PC-9 (cell line): ENCODE measurements at regions of chr1 and their contacts with region 1.

Region 1: GRCh38 chr1:84632673-84633434 is 57.4 kb downstream of the SSX2IP start:
- DNase-seq: peak; percentile 41 to 91
- H3K4me3 ChIP-seq: no peak overlapping the region
- H3K27ac ChIP-seq: peak overlapping the region; percentile 90
- H3K4me1 ChIP-seq: peaks cover 42% of the 10 kb centered on the region
- H3K27me3 ChIP-seq: no peaks in the 10 kb centered on the region
- CTCF ChIP-seq: no peak

Region 2: DNA sequence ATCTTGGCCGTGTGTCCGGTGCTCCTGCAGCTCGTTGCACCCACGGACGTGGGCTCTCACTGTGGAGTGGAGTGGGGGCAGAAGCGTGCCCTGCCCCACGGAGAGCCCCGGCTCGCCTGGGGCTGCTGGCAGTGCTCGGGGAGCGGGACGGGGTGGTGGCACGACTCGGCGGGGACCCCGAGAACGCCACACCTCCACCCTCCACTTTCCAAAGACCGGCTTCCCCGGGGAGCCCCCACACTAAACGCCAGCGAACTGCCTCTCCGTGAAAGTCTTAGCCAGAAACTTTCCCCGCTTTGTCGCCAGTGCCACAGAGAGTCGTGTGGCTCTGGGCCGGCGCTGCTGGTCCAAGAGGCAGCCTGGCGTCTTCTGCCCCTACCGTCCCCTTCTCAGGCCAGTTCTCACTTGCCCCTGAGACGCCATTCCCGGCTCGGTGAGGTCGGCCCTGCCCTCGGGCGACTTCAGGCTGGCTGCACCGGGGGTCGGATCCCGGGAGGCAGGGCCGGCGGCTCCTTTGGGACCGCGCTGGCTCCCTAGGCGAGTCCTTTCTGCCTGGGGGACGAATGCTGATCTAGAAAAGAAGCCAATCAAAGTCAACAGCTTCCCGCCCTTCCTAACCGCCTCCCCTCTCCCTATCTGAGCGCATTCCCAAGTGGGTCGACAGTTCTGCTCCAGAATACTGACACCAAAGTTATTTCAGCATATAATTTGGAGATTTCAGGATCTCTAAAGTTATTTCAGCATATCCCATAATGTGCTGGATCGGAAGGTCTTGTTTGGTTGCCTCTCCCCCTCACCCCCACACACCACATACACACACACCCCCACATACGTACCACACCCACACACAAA is 333.9 kb before region 1 on chr1:
- CTCF ChIA-PET with region 1: no interaction called
- POLR2A ChIA-PET with region 1: no interaction called
- intact Hi-C with region 1: no loop called
- DNase-seq: peak in 1 of 2 experiments; percentile 42
- H3K4me3 ChIP-seq: peak overlapping the region; percentile 99
- H3K27ac ChIP-seq: no peak overlapping the region
- H3K4me1 ChIP-seq: peaks cover 24% of the 10 kb centered on the region
- H3K27me3 ChIP-seq: no peaks in the 10 kb centered on the region
- CTCF ChIP-seq: no peak

Region 3: GRCh38 chr1:84365225-84366221 is 267.3 kb before region 1 on chr1:
- CTCF ChIA-PET with region 1: no interaction called
- POLR2A ChIA-PET with region 1: no interaction called
- intact Hi-C with region 1: loop called (anchors 10 kb)
- DNase-seq: peak; percentile 58 to 99
- H3K4me3 ChIP-seq: no peak overlapping the region
- H3K27ac ChIP-seq: peak overlapping the region; percentile 59
- H3K4me1 ChIP-seq: peaks cover 36% of the 10 kb centered on the region
- H3K27me3 ChIP-seq: no peaks in the 10 kb centered on the region
- CTCF ChIP-seq: no peak

Region 4: DNA sequence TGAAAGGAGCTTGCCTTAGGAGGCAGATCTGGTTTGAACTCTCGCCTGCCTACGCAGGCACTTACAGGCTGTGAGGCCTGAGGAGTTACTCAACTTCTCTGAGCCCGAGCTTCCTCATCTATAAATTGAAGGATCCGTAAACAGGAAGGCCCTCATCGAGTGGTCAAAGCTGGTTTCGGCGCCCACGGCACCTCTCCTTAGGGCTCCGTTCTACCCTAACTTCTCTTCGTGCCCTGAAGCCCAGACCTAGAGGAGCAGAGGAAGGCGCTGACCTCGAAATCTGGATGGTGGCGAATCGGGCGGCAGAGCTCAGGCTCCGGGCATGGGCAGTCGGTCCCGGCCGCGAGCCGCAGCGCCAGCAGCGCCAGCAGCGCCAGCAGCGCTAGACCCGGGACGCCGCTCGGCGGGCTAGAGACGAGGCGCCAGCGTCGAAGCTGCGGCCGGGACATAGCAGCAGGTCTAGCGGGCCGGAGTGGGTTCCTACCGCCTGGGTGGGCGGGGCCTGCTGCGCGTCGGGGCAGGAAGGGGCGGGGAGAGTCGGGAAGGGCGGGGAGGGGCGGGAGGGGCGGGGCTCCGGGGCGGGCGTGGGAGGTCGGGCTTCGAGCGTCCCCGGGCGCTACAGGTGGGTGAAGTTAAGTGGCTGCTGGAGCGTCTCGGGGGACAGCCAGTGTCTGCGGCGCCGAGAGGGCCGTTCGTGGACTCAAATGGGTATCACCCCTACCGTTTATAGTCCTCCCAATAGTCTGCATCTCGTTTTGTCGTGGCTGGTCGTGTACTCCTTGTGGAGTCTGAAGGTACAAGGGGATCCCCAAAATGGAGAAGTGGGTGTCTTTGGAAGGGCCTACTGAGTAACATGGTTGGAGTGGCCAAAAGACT is 58.6 kb before region 1 on chr1 and contains the start of gene CTBS:
- CTCF ChIA-PET with region 1: no interaction called
- POLR2A ChIA-PET with region 1: no interaction called
- intact Hi-C with region 1: loop called (anchors 10 kb)
- DNase-seq: peak; percentile 78 to 80
- H3K4me3 ChIP-seq: peak within 1 kb of the TSS; percentile 89
- H3K27ac ChIP-seq: peak within 1 kb of the TSS; percentile 94
- H3K4me1 ChIP-seq: peaks cover 26% of the 10 kb centered on the region
- H3K27me3 ChIP-seq: no peaks in the 10 kb centered on the region
- CTCF ChIP-seq: no peak
- total RNA-seq, gene CTBS: 17.5 and 20.2 TPM in 2 replicates

Region 5: DNA sequence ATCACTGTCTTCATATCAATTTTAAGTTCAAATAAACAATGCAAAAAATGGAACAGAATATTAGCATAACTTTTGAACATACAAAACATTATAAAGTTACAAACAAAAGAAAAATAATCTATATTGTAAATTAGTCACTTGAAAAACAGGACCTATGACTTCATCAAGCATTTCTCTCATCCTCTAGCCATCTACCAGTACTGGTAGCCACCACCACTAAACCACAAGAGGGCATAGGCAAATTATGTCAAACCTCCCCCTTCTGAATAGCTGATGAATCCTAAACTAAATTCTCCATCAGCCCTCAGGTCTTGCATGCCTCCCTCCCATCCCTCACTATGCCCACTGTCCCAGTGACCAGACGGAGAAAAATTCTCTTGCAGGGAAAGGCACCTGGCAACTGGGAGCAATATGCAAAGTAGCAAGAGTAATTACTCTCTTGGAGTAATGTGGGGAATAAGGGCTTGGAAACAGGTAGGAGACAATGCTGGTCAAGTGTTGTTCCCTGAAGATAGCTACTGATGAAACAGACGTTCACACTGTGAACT is 20.4 kb after region 1 on chr1:
- CTCF ChIA-PET with region 1: no interaction called
- POLR2A ChIA-PET with region 1: interaction called, 21 read pairs
- intact Hi-C with region 1: no loop called
- DNase-seq: no peak
- H3K4me3 ChIP-seq: no peak overlapping the region
- H3K27ac ChIP-seq: no peak overlapping the region
- H3K4me1 ChIP-seq: no peaks in the 10 kb centered on the region
- H3K27me3 ChIP-seq: no peaks in the 10 kb centered on the region
- CTCF ChIP-seq: no peak

Region 6: GRCh38 chr1:84690397-84691121 is 57.7 kb after region 1 on chr1 and contains the start of gene SSX2IP:
- CTCF ChIA-PET with region 1: no interaction called
- POLR2A ChIA-PET with region 1: no interaction called
- intact Hi-C with region 1: loop called (anchors 5 kb)
- DNase-seq: peak; percentile 95 to 99
- H3K4me3 ChIP-seq: peak within 1 kb of the TSS; percentile 96
- H3K27ac ChIP-seq: peak within 1 kb of the TSS; percentile 72
- H3K4me1 ChIP-seq: peaks cover 23% of the 10 kb centered on the region
- H3K27me3 ChIP-seq: no peaks in the 10 kb centered on the region
- CTCF ChIP-seq: no peak
- total RNA-seq, gene SSX2IP: 16.4 and 20.7 TPM in 2 replicates

Region 7: GRCh38 chr1:85681087-85681486 is 1048.2 kb after region 1 on chr1:
- CTCF ChIA-PET with region 1: no interaction called
- POLR2A ChIA-PET with region 1: no interaction called
- intact Hi-C with region 1: no loop called
- DNase-seq: peak in 1 of 2 experiments; percentile 69
- H3K4me3 ChIP-seq: no peak overlapping the region
- H3K27ac ChIP-seq: no peak overlapping the region
- H3K4me1 ChIP-seq: no peaks in the 10 kb centered on the region
- H3K27me3 ChIP-seq: no peaks in the 10 kb centered on the region
- CTCF ChIP-seq: no peak